CD8-positive, alpha-beta T cell (primary cell): ENCODE measurements at regions of chr10 and their contacts with region 1.

Region 1: GRCh38 chr10:75111367-75111906 is at the start of gene SAMD8:
- DNase-seq: peak; percentile 83 to 98 (median 94)
- ATAC-seq: peak; percentile 77
- H3K4me3 ChIP-seq: peak within 1 kb of the TSS; percentile 68 to 99
- H3K4me3 Mint-ChIP-seq: peak within 1 kb of the TSS; percentile 83
- H3K27ac ChIP-seq: peak within 1 kb of the TSS; percentile 77 to 97
- H3K27ac Mint-ChIP-seq: peak within 1 kb of the TSS; percentile 97
- H3K4me1 ChIP-seq: peaks cover 20% of the 10 kb centered on the region
- H3K4me1 Mint-ChIP-seq: peaks cover 56% of the 10 kb centered on the region
- H3K27me3 ChIP-seq: no peaks in the 10 kb centered on the region
- H3K27me3 Mint-ChIP-seq: no peaks in the 10 kb centered on the region
- CTCF ChIP-seq: no peak
- total RNA-seq, gene SAMD8: 41.2 to 41.4 TPM

Region 2: DNA sequence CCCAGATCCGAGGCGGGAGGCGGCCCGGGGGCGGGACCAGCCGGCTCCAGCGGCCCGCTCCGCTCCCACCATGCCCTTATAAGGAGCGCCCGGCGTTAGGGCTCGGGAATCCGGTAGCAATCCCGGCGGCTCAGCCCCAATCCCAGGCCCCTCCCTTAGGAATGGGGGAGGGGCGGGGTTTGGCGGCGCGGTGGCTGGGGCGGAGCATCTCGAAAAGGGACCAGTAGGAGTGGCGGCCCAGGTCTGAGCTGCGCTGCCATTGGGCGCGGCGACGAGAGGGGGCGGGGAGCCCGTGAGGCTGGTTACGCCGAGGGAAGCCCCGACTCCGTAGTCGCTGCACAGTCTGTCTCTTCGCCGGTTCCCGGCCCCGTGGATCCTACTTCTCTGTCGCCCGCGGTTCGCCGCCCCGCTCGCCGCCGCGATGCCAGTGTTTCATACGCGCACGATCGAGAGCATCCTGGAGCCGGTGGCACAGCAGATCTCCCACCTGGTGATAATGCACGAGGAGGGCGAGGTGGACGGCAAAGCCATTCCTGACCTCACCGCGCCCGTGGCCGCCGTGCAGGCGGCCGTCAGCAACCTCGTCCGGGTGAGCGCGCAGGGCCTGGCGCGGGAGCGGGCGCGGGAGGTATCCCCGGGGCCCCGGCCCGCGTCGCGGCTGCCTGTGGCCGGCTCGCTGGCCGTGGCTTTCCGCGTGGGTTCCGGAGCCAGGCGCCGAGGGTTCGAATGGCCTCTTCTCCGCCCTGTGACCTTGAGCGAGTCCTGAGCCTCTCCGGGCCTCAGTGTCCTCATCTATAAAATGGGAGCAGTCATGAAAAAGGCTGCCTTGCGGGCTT is 1113.4 kb before region 1 on chr10 and contains the start of gene VCL:
- CTCF ChIA-PET with region 1: no interaction called
- POLR2A ChIA-PET with region 1: no interaction called
- intact Hi-C with region 1: loop called in 1 of 2 experiments (anchors 5 kb)
- DNase-seq: peak; percentile 91 to 97 (median 95)
- ATAC-seq: peak; percentile 96
- H3K4me3 ChIP-seq: peak within 1 kb of the TSS; percentile 82
- H3K4me3 Mint-ChIP-seq: peak within 1 kb of the TSS; percentile 100
- H3K27ac ChIP-seq: peak within 1 kb of the TSS; percentile 63
- H3K27ac Mint-ChIP-seq: peak within 1 kb of the TSS; percentile 96
- H3K4me1 ChIP-seq: peaks cover 32% of the 10 kb centered on the region
- H3K4me1 Mint-ChIP-seq: peaks cover 45% of the 10 kb centered on the region
- H3K27me3 ChIP-seq: no peaks in the 10 kb centered on the region
- H3K27me3 Mint-ChIP-seq: no peaks in the 10 kb centered on the region
- CTCF ChIP-seq: no peak
- total RNA-seq, gene VCL: 6.6 to 9.4 TPM

Region 3: GRCh38 chr10:74176380-74177139 is 934.9 kb before region 1 on chr10:
- CTCF ChIA-PET with region 1: no interaction called
- POLR2A ChIA-PET with region 1: no interaction called
- intact Hi-C with region 1: loop called in 1 of 2 experiments (anchors 5 kb)
- DNase-seq: peak; percentile 89 to 99 (median 96)
- ATAC-seq: peak; percentile 93
- H3K4me3 ChIP-seq: peak overlapping the region; percentile 89 to 91
- H3K4me3 Mint-ChIP-seq: peak overlapping the region; percentile 93
- H3K27ac ChIP-seq: peak overlapping the region; percentile 85 to 89
- H3K27ac Mint-ChIP-seq: peak overlapping the region; percentile 97
- H3K4me1 ChIP-seq: peaks cover 34% of the 10 kb centered on the region
- H3K4me1 Mint-ChIP-seq: peaks cover 42% of the 10 kb centered on the region
- H3K27me3 ChIP-seq: no peaks in the 10 kb centered on the region
- H3K27me3 Mint-ChIP-seq: no peaks in the 10 kb centered on the region
- CTCF ChIP-seq: no peak

Region 4: GRCh38 chr10:74589226-74589673 is 522.2 kb before region 1 on chr10:
- CTCF ChIA-PET with region 1: no interaction called
- POLR2A ChIA-PET with region 1: no interaction called
- intact Hi-C with region 1: loop called in 1 of 2 experiments (anchors 1 kb)
- DNase-seq: peak; percentile 70 to 97 (median 86)
- ATAC-seq: peak; percentile 76
- H3K4me3 ChIP-seq: no peak overlapping the region
- H3K4me3 Mint-ChIP-seq: peak overlapping the region; percentile 49
- H3K27ac ChIP-seq: peak overlapping the region; percentile 36 to 61
- H3K27ac Mint-ChIP-seq: peak overlapping the region; percentile 87
- H3K4me1 ChIP-seq: peaks cover 48% of the 10 kb centered on the region
- H3K4me1 Mint-ChIP-seq: peaks cover 61% of the 10 kb centered on the region
- H3K27me3 ChIP-seq: no peaks in the 10 kb centered on the region
- H3K27me3 Mint-ChIP-seq: no peaks in the 10 kb centered on the region
- CTCF ChIP-seq: no peak

Region 5: GRCh38 chr10:75165684-75166622 is 54.5 kb after region 1 on chr10:
- CTCF ChIA-PET with region 1: interaction called, 3 read pairs
- POLR2A ChIA-PET with region 1: interaction called, 3 read pairs
- intact Hi-C with region 1: loop called in 1 of 2 experiments (anchors 10 kb)
- DNase-seq: peak in 2 of 9 experiments; percentile 46 to 64
- ATAC-seq: peak; percentile 58
- H3K4me3 ChIP-seq: no peak overlapping the region
- H3K4me3 Mint-ChIP-seq: peak overlapping the region; percentile 72
- H3K27ac ChIP-seq: peak overlapping the region in 1 of 2 experiments; percentile 63
- H3K27ac Mint-ChIP-seq: peak overlapping the region; percentile 89
- H3K4me1 ChIP-seq: peaks cover 24% of the 10 kb centered on the region
- H3K4me1 Mint-ChIP-seq: peaks cover 48% of the 10 kb centered on the region
- H3K27me3 ChIP-seq: no peaks in the 10 kb centered on the region
- H3K27me3 Mint-ChIP-seq: no peaks in the 10 kb centered on the region
- CTCF ChIP-seq: no peak

Region 6: DNA sequence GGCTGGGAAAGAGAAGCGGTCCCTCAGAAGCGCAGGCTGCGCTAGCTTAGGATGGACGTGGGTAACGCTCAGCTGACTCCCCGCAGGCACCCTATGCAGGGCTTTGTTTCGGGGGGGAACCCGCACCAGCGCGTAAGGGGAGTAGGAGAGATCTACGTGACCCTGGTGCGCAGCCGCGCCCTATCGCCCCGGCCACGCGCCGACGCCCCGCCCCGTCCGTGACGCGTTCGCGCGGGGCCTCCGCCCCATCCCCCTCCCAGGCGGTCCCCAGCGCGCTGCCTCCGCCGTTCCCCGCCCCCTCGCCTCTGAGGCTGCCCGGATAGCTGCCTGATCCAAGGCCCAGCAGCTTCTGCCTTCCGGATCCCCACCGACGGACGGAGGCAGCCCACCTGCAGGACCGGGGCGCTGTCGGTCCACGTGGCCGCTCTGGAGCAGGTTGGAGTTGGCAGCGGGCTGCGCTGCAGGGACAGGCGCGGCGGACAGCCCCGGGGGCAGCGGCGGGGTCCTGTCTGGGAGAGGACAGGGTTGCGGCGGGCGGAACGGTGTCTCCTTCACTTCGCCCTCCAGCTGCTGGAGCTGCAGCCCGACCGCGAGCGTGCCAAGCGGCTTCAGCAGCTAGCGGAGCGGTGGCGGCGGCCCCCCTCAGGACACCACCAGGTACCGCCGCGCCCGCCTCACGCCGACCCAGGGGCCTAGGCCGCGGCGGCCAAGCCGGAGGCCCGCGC is 99.0 kb after region 1 on chr10 and contains the start of gene VDAC2:
- CTCF ChIA-PET with region 1: no interaction called
- POLR2A ChIA-PET with region 1: interaction called, 11 read pairs
- intact Hi-C with region 1: loop called (anchors 1 kb)
- DNase-seq: peak; percentile 93 to 99 (median 96)
- ATAC-seq: peak; percentile 89
- H3K4me3 ChIP-seq: peak within 1 kb of the TSS; percentile 90 to 93
- H3K4me3 Mint-ChIP-seq: peak within 1 kb of the TSS; percentile 97
- H3K27ac ChIP-seq: peak within 1 kb of the TSS; percentile 99 to 100
- H3K27ac Mint-ChIP-seq: peak within 1 kb of the TSS; percentile 100
- H3K4me1 ChIP-seq: peaks cover 28% of the 10 kb centered on the region
- H3K4me1 Mint-ChIP-seq: peaks cover 26% of the 10 kb centered on the region
- H3K27me3 ChIP-seq: no peaks in the 10 kb centered on the region
- H3K27me3 Mint-ChIP-seq: no peaks in the 10 kb centered on the region
- CTCF ChIP-seq: no peak
- total RNA-seq, gene VDAC2: 184 to 187 TPM